Caco-2 (cell line): ENCODE measurements at regions of chr2 and their contacts with region 1.

Region 1: DNA sequence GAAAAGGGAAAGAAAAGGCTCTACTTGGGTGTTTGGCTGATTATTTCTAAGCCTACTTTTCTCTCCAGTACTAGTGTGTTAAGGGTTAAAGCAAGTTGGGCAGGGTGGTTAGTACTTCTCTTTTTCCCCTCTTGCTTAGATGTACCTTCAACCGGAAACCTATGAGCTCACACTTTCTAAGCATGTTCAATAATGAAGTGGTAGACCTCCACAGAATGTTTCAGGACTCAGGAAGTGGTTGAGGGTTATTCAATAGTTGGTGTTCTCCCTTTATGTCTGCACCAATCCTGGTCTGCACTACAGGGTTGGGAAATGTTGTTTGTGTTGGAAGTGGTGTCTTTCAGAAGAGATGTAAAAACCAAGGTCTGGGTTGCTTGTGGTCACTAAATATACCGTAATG is 137.1 kb downstream of the ZEB2 start:
- DNase-seq: no peak
- H3K4me3 ChIP-seq: no peak overlapping the region
- H3K4me3 Mint-ChIP-seq: no peak overlapping the region
- H3K27ac Mint-ChIP-seq: no peak overlapping the region
- H3K4me1 ChIP-seq: no peaks in the 10 kb centered on the region
- H3K4me1 Mint-ChIP-seq: no peaks in the 10 kb centered on the region
- H3K27me3 ChIP-seq: no peaks in the 10 kb centered on the region; the same call in none of the 2 replicates
- H3K27me3 Mint-ChIP-seq: peaks cover 15% of the 10 kb centered on the region
- CTCF ChIP-seq: no peak

Region 2: DNA sequence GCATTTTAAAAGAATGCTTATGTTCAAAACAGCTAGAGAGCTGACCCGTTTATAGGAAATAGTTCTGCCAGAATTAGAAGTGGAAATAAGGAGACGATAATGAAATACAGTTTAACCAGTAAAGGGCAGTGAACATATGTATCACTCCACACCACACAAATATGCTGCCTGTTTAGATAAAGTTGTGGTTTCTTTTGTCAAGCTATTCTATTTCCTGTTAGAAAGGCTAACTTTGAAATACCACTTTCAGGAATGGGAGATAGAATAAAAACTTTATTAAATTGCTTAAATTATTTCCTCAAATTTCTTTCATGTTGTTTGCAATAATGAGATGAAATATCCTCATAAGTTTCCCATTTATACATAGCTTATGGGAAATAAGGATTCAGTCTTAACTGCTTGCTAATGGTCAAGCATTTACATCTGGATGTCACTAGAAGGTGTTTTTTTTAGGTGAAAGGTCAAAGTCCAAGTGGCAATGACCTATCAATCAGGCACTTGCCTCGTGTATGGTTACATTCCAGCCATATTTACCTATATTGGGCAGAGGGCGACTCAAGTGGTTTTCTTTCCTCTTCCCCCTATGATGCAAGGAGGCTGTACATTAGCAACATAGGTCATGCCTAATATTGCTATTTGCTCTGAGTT is 11.8 kb before region 1 on chr2:
- CTCF ChIA-PET with region 1: no interaction called
- POLR2A ChIA-PET with region 1: no interaction called
- intact Hi-C with region 1: loop called (anchors 2 kb)
- DNase-seq: peak in 1 of 2 experiments; percentile 42
- H3K4me3 ChIP-seq: no peak overlapping the region
- H3K4me3 Mint-ChIP-seq: no peak overlapping the region
- H3K27ac Mint-ChIP-seq: no peak overlapping the region
- H3K4me1 ChIP-seq: peaks cover 18% of the 10 kb centered on the region; the same call in 1 of the 2 replicates
- H3K4me1 Mint-ChIP-seq: peaks cover 14% of the 10 kb centered on the region
- H3K27me3 ChIP-seq: no peaks in the 10 kb centered on the region
- H3K27me3 Mint-ChIP-seq: peaks cover 4% of the 10 kb centered on the region
- CTCF ChIP-seq: no peak

Region 3: GRCh38 chr2:144402251-144402650 is 19.4 kb after region 1 on chr2:
- CTCF ChIA-PET with region 1: no interaction called
- POLR2A ChIA-PET with region 1: no interaction called
- intact Hi-C with region 1: no loop called
- DNase-seq: no peak
- H3K4me3 ChIP-seq: no peak overlapping the region
- H3K4me3 Mint-ChIP-seq: no peak overlapping the region
- H3K27ac Mint-ChIP-seq: no peak overlapping the region
- H3K4me1 ChIP-seq: no peaks in the 10 kb centered on the region; the same call in 1 of the 2 replicates
- H3K4me1 Mint-ChIP-seq: no peaks in the 10 kb centered on the region
- H3K27me3 ChIP-seq: no peaks in the 10 kb centered on the region
- H3K27me3 Mint-ChIP-seq: peaks cover 18% of the 10 kb centered on the region
- CTCF ChIP-seq: no peak